ENCODE measurements at regions of chr1 and their contacts with region 1.

Region 1: GRCh38 chr1:35564037-35564883 is 6.7 kb downstream of the NCDN start:
- DNase-seq: no peak
- ATAC-seq: peak; percentile 88
- H3K4me3 ChIP-seq: no peak overlapping the region
- H3K27ac ChIP-seq: no peak overlapping the region
- H3K4me1 ChIP-seq: no peaks in the 10 kb centered on the region; the same call in 1 of the 2 replicates
- H3K27me3 ChIP-seq: no peaks in the 10 kb centered on the region
- CTCF ChIP-seq: peak; percentile 77 to 88 (median 82)
- EP300 ChIP-seq: no peak
- POLR2A ChIP-seq: no peak
- RAD21 ChIP-seq: peak; percentile 85

Region 2: DNA sequence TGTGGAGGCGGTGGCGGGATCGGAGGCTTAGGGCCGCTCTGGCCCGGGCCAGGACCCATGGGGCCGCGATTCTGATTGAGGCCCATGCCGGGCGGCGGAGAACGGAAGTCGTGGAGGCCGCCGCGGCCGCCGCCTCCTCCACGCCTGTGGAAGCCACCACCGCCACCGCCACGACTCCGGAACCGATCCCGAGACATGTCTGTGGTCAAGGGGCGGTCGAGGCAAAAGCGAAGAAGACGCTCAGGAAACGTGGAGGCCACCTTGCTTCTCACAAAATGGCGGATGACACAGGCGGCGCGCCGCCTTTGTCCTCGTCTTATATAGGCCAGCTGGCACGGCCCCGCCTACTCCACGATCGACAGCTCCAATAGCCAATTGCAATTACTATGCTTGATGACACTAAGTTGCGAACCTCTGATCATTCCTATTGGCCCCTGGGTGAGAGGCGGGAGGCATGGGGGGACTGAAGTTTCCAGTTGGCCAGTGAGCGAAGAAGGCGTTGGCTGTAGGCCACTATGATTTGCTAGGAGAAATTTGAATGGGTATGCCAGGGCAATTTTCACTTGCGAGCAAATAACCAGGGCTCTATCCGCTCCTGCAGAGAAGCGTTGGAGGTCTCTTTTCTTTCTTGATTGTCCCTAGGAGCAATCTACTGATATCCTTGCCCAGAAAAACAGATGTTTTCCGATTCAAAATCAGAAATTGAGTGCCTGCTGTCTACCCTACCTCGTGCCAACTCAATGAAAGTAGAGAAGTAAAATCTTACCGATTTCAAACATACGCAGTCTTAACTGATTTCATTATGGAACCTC is 371.2 kb before region 1 on chr1 and contains the start of gene SFPQ:
- CTCF ChIA-PET with region 1: no interaction called
- POLR2A ChIA-PET with region 1: no interaction called
- RAD21 ChIA-PET with region 1: no interaction called
- SMC1A ChIA-PET with region 1: no interaction called
- in situ Hi-C with region 1: no loop called
- intact Hi-C with region 1: no loop called
- DNase-seq: peak; percentile 97
- ATAC-seq: peak; percentile 93
- H3K4me3 ChIP-seq: peak within 1 kb of the TSS; percentile 80
- H3K27ac ChIP-seq: peak within 1 kb of the TSS; percentile 94
- H3K4me1 ChIP-seq: no peaks in the 10 kb centered on the region
- H3K27me3 ChIP-seq: no peaks in the 10 kb centered on the region
- CTCF ChIP-seq: no peak
- EP300 ChIP-seq: no peak
- POLR2A ChIP-seq: peak; percentile 98
- RAD21 ChIP-seq: no peak
- polyA plus RNA-seq, gene SFPQ: 78.5 to 117 TPM

Region 3: DNA sequence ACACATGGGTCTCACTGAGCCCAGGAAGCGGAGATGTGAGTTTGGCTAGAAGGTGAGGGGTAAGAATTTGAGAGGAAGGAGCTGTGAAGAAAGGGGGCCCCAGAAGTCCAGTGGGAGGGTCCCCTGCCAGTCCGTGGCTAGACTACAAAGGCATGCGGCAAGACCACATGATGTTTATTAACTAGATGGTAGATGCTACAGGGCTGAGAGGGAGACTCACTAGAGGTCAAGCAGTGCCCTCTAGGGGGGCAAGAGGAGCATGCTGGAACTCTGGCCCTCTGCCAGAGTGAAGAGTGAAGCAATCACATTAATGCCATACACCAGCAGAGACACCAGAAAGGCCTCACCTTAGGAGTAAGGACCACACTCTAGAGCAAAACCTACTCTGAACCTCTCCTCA is 19.3 kb before region 1 on chr1:
- CTCF ChIA-PET with region 1: interaction called, 12 read pairs
- POLR2A ChIA-PET with region 1: no interaction called
- RAD21 ChIA-PET with region 1: interaction called, 8 read pairs
- SMC1A ChIA-PET with region 1: interaction called, 9 read pairs
- in situ Hi-C with region 1: no loop called
- intact Hi-C with region 1: no loop called
- DNase-seq: peak; percentile 50
- ATAC-seq: peak; percentile 98
- H3K4me3 ChIP-seq: no peak overlapping the region
- H3K27ac ChIP-seq: no peak overlapping the region
- H3K4me1 ChIP-seq: peaks cover 5% of the 10 kb centered on the region; the same call in 1 of the 2 replicates
- H3K27me3 ChIP-seq: no peaks in the 10 kb centered on the region
- CTCF ChIP-seq: peak; percentile 64 to 89 (median 76)
- EP300 ChIP-seq: no peak
- POLR2A ChIP-seq: no peak
- RAD21 ChIP-seq: peak; percentile 73

Region 4: DNA sequence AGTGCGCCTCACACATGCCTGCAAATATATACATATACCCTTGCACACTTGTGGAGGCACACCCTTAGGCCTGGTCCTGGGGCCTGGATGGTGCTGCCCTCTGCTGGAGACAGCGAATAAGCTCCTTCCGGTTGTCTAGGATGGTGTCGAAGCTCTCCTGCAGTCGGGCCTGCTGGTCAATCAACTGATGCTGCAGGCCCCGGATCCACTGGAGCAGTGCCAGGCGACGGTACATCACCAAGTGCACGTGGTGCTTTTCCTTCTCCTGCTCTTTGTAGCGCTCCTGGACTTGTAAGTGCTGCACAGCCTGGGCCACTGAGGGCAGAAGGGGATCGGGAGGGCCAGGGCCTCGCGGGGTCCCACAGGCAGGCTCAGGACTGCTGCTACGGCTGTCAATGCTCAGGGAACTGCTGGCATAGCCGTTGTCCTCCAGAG is 151.3 kb after region 1 on chr1:
- CTCF ChIA-PET with region 1: interaction called, 105 read pairs
- POLR2A ChIA-PET with region 1: no interaction called
- RAD21 ChIA-PET with region 1: interaction called, 57 read pairs
- SMC1A ChIA-PET with region 1: interaction called, 35 read pairs
- in situ Hi-C with region 1: loop called (anchors 5 kb)
- intact Hi-C with region 1: loop called (anchors 2 kb)
- DNase-seq: peak; percentile 42
- ATAC-seq: peak; percentile 80
- H3K4me3 ChIP-seq: no peak overlapping the region
- H3K27ac ChIP-seq: no peak overlapping the region
- H3K4me1 ChIP-seq: peaks cover 5% of the 10 kb centered on the region
- H3K27me3 ChIP-seq: no peaks in the 10 kb centered on the region
- CTCF ChIP-seq: peak; percentile 88 to 92 (median 92); a peak in 5 of 6 replicates
- EP300 ChIP-seq: no peak
- POLR2A ChIP-seq: no peak
- RAD21 ChIP-seq: peak; percentile 82

Region 5: DNA sequence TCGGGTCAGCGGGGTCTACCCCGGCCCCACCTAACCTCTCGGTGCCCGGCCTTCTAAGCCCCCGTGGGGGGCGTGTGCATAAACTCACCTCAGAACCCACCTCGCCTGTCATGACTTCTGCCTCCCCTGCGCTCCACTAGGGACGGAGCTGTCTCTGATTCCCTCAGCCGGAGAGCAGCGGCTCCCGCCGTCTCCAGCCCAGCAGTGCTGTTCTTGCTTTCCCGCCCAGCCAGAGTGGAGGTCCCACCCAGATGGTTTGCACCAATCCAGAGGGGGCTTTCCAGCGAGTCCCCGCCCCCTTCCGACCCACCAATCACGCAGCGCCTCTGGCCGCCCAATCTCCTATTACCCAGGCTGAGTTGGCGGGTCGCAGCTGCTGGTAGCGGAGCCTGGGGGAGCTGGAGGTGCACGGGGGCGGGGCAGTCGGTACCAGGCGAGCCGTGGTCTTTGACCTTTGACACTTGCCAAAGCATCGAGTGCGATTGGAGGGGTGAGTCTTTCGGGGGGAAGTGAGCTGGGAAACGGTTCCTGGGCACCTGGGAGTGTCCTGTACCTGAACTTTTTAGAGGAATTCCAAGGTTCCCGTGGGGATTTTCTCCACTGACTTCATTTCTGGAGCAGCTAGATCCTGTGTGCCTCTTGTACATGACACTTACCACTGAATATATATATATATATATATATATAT is 205.6 kb after region 1 on chr1 and contains the start of gene CLSPN:
- CTCF ChIA-PET with region 1: interaction called, 58 read pairs
- POLR2A ChIA-PET with region 1: interaction called, 3 read pairs
- RAD21 ChIA-PET with region 1: interaction called, 12 read pairs
- SMC1A ChIA-PET with region 1: interaction called, 15 read pairs
- in situ Hi-C with region 1: loop called (anchors 5 kb)
- intact Hi-C with region 1: loop called (anchors 1 kb)
- DNase-seq: peak; percentile 86
- ATAC-seq: peak; percentile 95
- H3K4me3 ChIP-seq: peak within 1 kb of the TSS; percentile 78
- H3K27ac ChIP-seq: peak within 1 kb of the TSS; percentile 91
- H3K4me1 ChIP-seq: no peaks in the 10 kb centered on the region
- H3K27me3 ChIP-seq: no peaks in the 10 kb centered on the region
- CTCF ChIP-seq: no peak
- EP300 ChIP-seq: no peak
- POLR2A ChIP-seq: peak; percentile 91
- RAD21 ChIP-seq: no peak
- polyA plus RNA-seq, gene CLSPN: 13.9 to 16.6 TPM